CD8-positive, alpha-beta memory T cell (primary cell): ENCODE measurements at regions of chr22 and their contacts with region 1.

Region 1: GRCh38 chr22:39532215-39533071 is at the start of gene RPS19BP1:
- DNase-seq: peak; percentile 98 to 100 (median 99)
- H3K4me3 ChIP-seq: peak within 1 kb of the TSS; percentile 92
- H3K4me3 Mint-ChIP-seq: peak within 1 kb of the TSS; percentile 87 to 97 (median 93)
- H3K27ac ChIP-seq: peak within 1 kb of the TSS; percentile 91
- H3K27ac Mint-ChIP-seq: peak within 1 kb of the TSS; percentile 87 to 99 (median 94)
- H3K4me1 ChIP-seq: peaks cover 57% of the 10 kb centered on the region
- H3K4me1 Mint-ChIP-seq: peaks cover 47 to 63% (median 62%) of the 10 kb centered on the region in 3 donors
- H3K27me3 ChIP-seq: no peaks in the 10 kb centered on the region
- H3K27me3 Mint-ChIP-seq: no peaks in the 10 kb centered on the region
- total RNA-seq, gene RPS19BP1: 158 to 160 TPM

Region 2: DNA sequence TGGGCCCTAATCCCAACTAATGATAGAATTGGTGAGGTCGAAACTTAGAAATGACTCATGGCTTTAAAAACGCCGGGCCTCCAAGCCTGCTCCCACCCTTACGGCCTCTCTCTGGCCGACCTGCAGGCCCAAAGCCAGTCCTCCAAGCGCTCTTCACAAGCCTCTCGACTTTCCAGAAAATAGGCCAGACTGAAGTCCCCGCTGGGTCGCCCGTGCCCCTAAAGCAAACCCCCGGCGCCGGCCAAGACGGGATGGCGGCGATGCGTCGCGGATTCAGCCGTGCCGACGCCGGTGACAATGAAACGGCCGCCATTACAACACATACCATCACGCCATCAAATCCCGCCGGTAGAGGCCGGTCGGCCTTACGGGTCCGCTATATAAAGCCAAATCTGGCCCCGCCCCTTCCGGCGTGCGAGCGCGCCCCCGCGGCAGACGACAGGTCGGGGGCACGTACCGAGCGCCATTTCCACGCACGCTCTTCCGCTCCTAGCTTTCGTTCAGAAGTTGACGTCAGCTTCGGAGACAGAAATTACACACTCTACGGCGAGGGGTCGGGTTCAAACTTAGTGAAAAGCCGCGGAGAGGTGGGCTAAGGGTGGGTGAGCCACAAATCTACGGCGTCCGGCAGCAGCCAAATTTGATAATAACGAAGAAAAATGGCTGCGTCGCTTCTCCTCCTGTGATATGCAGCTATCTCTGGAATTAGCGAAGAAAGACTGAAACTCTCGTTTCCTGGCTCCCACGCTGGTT is 213.0 kb before region 1 on chr22 and contains the start of gene RPL3:
- CTCF ChIA-PET with region 1: interaction called, 13 read pairs
- POLR2A ChIA-PET with region 1: interaction called, 18 read pairs
- DNase-seq: peak; percentile 93 to 98 (median 97)
- H3K4me3 ChIP-seq: peak within 1 kb of the TSS; percentile 99
- H3K4me3 Mint-ChIP-seq: peak within 1 kb of the TSS; percentile 95 to 100 (median 99)
- H3K27ac ChIP-seq: peak within 1 kb of the TSS; percentile 93
- H3K27ac Mint-ChIP-seq: peak within 1 kb of the TSS; percentile 90 to 99 (median 97)
- H3K4me1 ChIP-seq: peaks cover 42% of the 10 kb centered on the region
- H3K4me1 Mint-ChIP-seq: peaks cover 47 to 57% (median 52%) of the 10 kb centered on the region in 3 donors
- H3K27me3 ChIP-seq: no peaks in the 10 kb centered on the region
- H3K27me3 Mint-ChIP-seq: peaks cover 0 to 10% of the 10 kb centered on the region in 2 donors
- total RNA-seq, gene RPL3: 2,574 to 2,607 TPM

Region 3: GRCh38 chr22:39490135-39490798 is 42.2 kb before region 1 on chr22:
- CTCF ChIA-PET with region 1: interaction called, 57 read pairs
- POLR2A ChIA-PET with region 1: interaction called, 4 read pairs
- DNase-seq: peak; percentile 62 to 82 (median 67)
- H3K4me3 ChIP-seq: no peak overlapping the region
- H3K4me3 Mint-ChIP-seq: no peak overlapping the region
- H3K27ac ChIP-seq: no peak overlapping the region
- H3K27ac Mint-ChIP-seq: no peak overlapping the region
- H3K4me1 ChIP-seq: peaks cover 10% of the 10 kb centered on the region
- H3K4me1 Mint-ChIP-seq: peaks cover 4 to 7% (median 6%) of the 10 kb centered on the region in 3 donors
- H3K27me3 ChIP-seq: no peaks in the 10 kb centered on the region
- H3K27me3 Mint-ChIP-seq: peaks cover 0 to 4% of the 10 kb centered on the region in 2 donors

Region 4: GRCh38 chr22:39514373-39514973 is 18.0 kb before region 1 on chr22:
- CTCF ChIA-PET with region 1: interaction called, 31 read pairs
- POLR2A ChIA-PET with region 1: interaction called, 33 read pairs
- DNase-seq: peak in 2 of 5 donors; percentile 42 to 65
- H3K4me3 ChIP-seq: no peak overlapping the region
- H3K4me3 Mint-ChIP-seq: peak overlapping the region in 1 of 7 donors; percentile 4
- H3K27ac ChIP-seq: no peak overlapping the region
- H3K27ac Mint-ChIP-seq: peak overlapping the region in 4 of 8 donors; percentile 25 to 58 (median 37)
- H3K4me1 ChIP-seq: peaks cover 7% of the 10 kb centered on the region
- H3K4me1 Mint-ChIP-seq: peaks cover 17 to 26% (median 21%) of the 10 kb centered on the region in 3 donors
- H3K27me3 ChIP-seq: no peaks in the 10 kb centered on the region
- H3K27me3 Mint-ChIP-seq: peaks cover 0 to 2% of the 10 kb centered on the region in 2 donors

Region 5: GRCh38 chr22:39655004-39655579 is 122.6 kb after region 1 on chr22:
- CTCF ChIA-PET with region 1: no interaction called
- POLR2A ChIA-PET with region 1: no interaction called
- DNase-seq: no peak
- H3K4me3 ChIP-seq: no peak overlapping the region
- H3K4me3 Mint-ChIP-seq: no peak overlapping the region
- H3K27ac ChIP-seq: no peak overlapping the region
- H3K27ac Mint-ChIP-seq: peak overlapping the region in 1 of 8 donors; percentile 18
- H3K4me1 ChIP-seq: peaks cover 37% of the 10 kb centered on the region
- H3K4me1 Mint-ChIP-seq: peaks cover 30 to 48% (median 33%) of the 10 kb centered on the region in 3 donors
- H3K27me3 ChIP-seq: no peaks in the 10 kb centered on the region
- H3K27me3 Mint-ChIP-seq: peaks cover 0 to 8% of the 10 kb centered on the region in 2 donors

Region 6: GRCh38 chr22:39900306-39901227 is 368.1 kb after region 1 on chr22 and contains the start of gene GRAP2:
- CTCF ChIA-PET with region 1: interaction called, 10 read pairs
- POLR2A ChIA-PET with region 1: no interaction called
- DNase-seq: peak; percentile 47 to 88 (median 87)
- H3K4me3 ChIP-seq: peak within 1 kb of the TSS; percentile 71
- H3K4me3 Mint-ChIP-seq: peak within 1 kb of the TSS; percentile 91 to 99 (median 97)
- H3K27ac ChIP-seq: peak within 1 kb of the TSS; percentile 32
- H3K27ac Mint-ChIP-seq: peak within 1 kb of the TSS in 7 of 8 donors; percentile 93 to 99 (median 96)
- H3K4me1 ChIP-seq: peaks cover 34% of the 10 kb centered on the region
- H3K4me1 Mint-ChIP-seq: peaks cover 21 to 24% (median 23%) of the 10 kb centered on the region in 3 donors
- H3K27me3 ChIP-seq: no peaks in the 10 kb centered on the region
- H3K27me3 Mint-ChIP-seq: no peaks in the 10 kb centered on the region
- total RNA-seq, gene GRAP2: 41.8 to 53.2 TPM

Region 7: DNA sequence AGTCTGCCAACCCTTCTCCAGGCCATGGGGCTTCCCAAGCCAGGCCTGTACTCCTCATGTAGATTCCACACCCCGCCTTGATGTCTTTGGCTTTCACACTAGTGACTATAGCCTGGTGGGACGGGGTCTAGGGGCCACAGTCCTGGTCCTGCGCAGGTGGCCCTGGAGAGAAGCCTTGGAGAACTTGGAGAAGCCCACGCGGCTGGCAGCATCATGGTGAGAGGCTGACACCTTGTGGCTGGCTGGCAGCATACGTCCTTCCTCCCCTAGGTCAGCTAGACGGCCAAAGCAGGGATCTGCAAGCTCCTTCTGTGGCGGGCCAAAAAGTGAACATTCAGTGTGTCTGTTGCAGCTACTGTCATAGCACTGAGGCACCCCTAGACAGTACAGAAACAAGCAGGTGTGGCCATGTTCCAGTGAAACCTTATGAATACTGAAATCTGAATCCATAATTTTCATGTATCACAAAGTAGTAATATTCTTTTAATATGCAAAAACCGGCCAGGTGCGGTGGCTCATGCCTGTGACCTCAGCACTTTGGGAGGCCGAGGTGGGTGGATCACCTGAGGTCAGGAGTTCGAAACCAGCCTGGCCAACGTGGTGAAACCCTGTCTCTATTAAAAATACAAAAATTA is 504.3 kb after region 1 on chr22:
- CTCF ChIA-PET with region 1: interaction called, 12 read pairs
- POLR2A ChIA-PET with region 1: no interaction called
- DNase-seq: peak in 4 of 5 donors; percentile 18 to 66 (median 29)
- H3K4me3 ChIP-seq: no peak overlapping the region
- H3K4me3 Mint-ChIP-seq: no peak overlapping the region
- H3K27ac ChIP-seq: no peak overlapping the region
- H3K27ac Mint-ChIP-seq: no peak overlapping the region
- H3K4me1 ChIP-seq: no peaks in the 10 kb centered on the region
- H3K4me1 Mint-ChIP-seq: no peaks in the 10 kb centered on the region
- H3K27me3 ChIP-seq: peaks cover 5% of the 10 kb centered on the region
- H3K27me3 Mint-ChIP-seq: peaks cover 20 to 32% of the 10 kb centered on the region in 2 donors